H1 (cell line): ENCODE measurements at regions of chr15 and their contacts with region 1.

Region 1: DNA sequence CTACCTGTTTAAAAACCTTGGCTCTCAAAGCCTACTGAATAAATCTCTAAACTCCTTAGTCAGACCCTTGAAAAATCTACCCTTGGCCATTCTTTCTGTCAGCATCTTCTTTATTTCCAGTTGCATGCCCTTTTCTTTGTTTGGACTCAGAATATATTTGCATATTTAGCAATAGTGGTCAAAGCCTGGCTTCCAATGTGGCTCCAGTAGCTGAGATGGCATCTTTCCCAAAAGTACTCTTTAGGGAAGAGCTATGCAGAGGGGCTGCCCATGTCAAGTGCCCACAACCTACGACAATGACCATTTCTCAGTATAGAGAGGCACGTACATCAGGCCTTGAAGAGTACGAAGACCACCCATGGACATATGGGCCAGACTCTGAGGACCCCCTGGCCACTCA is 47.2 kb downstream of the TLNRD1 start:
- DNase-seq: no peak
- H3K4me3 ChIP-seq: no peak overlapping the region
- H3K27ac ChIP-seq: no peak overlapping the region
- H3K4me1 ChIP-seq: no peaks in the 10 kb centered on the region
- H3K27me3 ChIP-seq: no peaks in the 10 kb centered on the region
- CTCF ChIP-seq: no peak
- EP300 ChIP-seq: no peak
- POLR2A ChIP-seq: no peak
- RAD21 ChIP-seq: no peak

Region 2: GRCh38 chr15:81033508-81033907 is 14.4 kb before region 1 on chr15:
- CTCF ChIA-PET with region 1: interaction called, 13 read pairs
- POLR2A ChIA-PET with region 1: no interaction called
- DNase-seq: no peak
- H3K4me3 ChIP-seq: no peak overlapping the region
- H3K27ac ChIP-seq: no peak overlapping the region
- H3K4me1 ChIP-seq: 0 out of 7 replicates have a peak, but pooled peaks cover 0 to 3% (median 0%) of the 10 kb centered on the region in 4 experiments
- H3K27me3 ChIP-seq: no peaks in the 10 kb centered on the region
- CTCF ChIP-seq: no peak
- EP300 ChIP-seq: no peak
- POLR2A ChIP-seq: no peak
- RAD21 ChIP-seq: no peak